Sciatic nerve (tissue), 2 donors: ENCODE measurements at regions of chr12 and their contacts with region 1.

Region 1: GRCh38 chr12:120432772-120433525 is 5.0 kb upstream of the COX6A1 start:
- DNase-seq: no peak
- ATAC-seq: no peak

Region 2: DNA sequence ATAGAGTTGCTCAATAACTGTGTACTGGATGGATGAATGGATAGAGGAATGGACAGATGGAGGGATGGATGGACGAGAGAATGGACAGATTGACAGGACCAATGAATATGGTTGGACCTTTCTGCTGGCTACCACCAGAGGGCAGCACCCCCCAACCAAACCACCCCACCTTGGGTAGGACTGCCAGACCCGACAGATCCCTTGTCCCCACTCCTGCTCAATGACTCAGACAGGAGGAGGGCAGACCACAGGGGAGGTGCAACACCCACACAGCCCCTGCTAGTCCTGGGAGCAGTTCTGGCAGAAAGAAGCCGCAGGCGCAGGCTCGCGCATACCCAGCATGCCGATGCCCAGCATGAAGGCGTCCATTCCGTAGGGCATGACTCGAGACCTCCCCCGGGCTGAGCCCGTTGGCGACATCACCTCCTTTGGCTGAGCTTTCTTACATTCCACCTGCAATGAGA is 76.3 kb before region 1 on chr12:
- intact Hi-C with region 1: loop called (anchors 5 kb)
- DNase-seq: peak; percentile 87
- ATAC-seq: peak; percentile 88

Region 3: GRCh38 chr12:120833849-120834248 is 400.9 kb after region 1 on chr12:
- intact Hi-C with region 1: no loop called
- DNase-seq: no peak
- ATAC-seq: no peak